ENCODE measurements at regions of chr6 and their contacts with region 1.

Region 1: GRCh38 chr6:158660333-158660754 is 10.5 kb downstream of the SYTL3 start:
- DNase-seq: no peak
- ATAC-seq: peak; percentile 79
- H3K4me3 ChIP-seq: no peak overlapping the region
- H3K27ac ChIP-seq: no peak overlapping the region
- H3K4me1 ChIP-seq: peaks cover 17% of the 10 kb centered on the region
- H3K27me3 ChIP-seq: peaks cover 9 to 47% of the 10 kb centered on the region in 2 experiments; a peak in 4 of 5 replicates
- CTCF ChIP-seq: peak; percentile 72
- EP300 ChIP-seq: no peak
- POLR2A ChIP-seq: no peak
- RAD21 ChIP-seq: peak; percentile 52; the same call in 1 of the 2 replicates

Region 2: DNA sequence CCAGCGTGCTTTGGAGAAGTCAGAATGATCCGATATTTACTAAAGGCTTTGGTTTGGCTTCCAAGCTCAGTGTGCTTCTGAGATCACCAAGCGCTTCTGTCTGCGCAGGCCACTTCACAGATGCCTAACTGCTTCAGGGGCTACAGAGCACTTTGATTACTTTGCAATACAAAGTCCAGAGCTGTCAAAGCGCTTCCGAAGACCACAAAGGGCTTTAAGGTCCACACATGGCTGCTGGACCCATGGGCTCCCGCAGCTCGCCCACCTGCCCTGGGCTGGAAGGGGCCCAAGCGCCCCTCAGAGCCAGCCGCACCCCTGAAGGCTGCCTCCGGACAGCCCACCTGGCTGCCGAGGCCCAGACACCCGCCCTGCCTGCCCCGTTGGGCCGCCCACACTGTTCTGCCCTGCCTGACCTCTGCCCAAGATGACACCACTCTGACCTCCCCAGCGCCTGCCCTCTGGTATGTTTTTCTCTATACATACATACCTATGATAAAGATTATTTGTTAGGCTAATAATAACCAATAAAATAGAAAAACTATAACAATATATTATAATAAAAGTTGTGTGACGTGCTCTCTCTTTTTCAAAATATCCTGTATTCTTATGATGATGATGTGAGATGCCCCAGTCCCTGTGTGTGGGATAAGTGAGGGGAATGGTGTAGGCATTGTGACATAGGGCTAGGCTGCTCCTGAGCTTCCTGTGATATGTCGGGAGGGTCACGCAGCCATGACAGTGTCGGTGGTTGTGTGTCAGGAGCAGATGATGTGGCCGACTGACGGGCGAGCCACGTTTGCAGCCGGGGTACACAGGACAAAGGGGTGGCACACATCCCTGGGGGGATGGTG is 38.4 kb before region 1 on chr6:
- CTCF ChIA-PET with region 1: no interaction called
- POLR2A ChIA-PET with region 1: no interaction called
- in situ Hi-C with region 1: no loop called
- intact Hi-C with region 1: no loop called
- DNase-seq: no peak
- ATAC-seq: peak; percentile 11
- H3K4me3 ChIP-seq: no peak overlapping the region
- H3K27ac ChIP-seq: no peak overlapping the region
- H3K4me1 ChIP-seq: peaks cover 2% of the 10 kb centered on the region; the same call in 1 of the 2 replicates
- H3K27me3 ChIP-seq: no peaks in the 10 kb centered on the region
- CTCF ChIP-seq: no peak
- EP300 ChIP-seq: no peak
- POLR2A ChIP-seq: no peak
- RAD21 ChIP-seq: no peak

Region 3: DNA sequence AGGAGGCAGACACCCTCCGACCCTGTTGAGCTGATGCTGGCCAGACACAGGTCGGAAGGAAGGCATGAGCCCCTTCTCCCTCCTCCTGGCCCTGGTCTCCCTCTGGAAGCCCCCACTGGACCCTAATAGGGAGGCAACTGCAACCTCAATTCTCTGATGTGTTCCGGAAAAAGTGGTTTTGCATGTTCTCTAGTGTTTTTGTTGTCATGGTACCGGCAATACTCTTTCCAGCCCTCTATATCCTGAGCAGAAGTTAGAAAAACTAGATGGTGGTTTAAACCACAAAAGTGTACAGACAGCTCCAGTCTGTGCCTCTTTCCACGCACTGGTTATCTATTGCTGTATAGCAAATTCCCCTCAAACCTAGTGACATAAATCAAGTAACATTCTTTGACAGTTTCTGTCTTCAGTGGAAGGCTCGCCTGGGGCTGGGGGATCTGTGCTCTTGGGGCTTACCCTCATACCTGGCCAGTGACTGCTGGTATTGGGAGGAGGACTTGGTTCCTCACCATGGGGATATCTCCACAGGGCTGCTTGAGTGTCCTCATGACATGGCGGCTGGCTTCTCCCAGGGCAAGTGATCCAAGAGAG is 26.5 kb after region 1 on chr6:
- CTCF ChIA-PET with region 1: interaction called, 4 read pairs
- POLR2A ChIA-PET with region 1: no interaction called
- in situ Hi-C with region 1: no loop called
- intact Hi-C with region 1: loop called (anchors 1 kb)
- DNase-seq: no peak
- ATAC-seq: no peak
- H3K4me3 ChIP-seq: no peak overlapping the region
- H3K27ac ChIP-seq: no peak overlapping the region
- H3K4me1 ChIP-seq: 0 out of 2 replicates have a peak, but pooled peaks cover 6% of the 10 kb centered on the region
- H3K27me3 ChIP-seq: peaks cover 0 to 28% of the 10 kb centered on the region in 2 experiments; a peak in 3 of 5 replicates
- CTCF ChIP-seq: no peak
- EP300 ChIP-seq: no peak
- POLR2A ChIP-seq: no peak
- RAD21 ChIP-seq: no peak

Measured in HepG2 (cell line).